PC-9 (cell line): ENCODE measurements at regions of chr2 and their contacts with region 1.

Region 1: GRCh38 chr2:237122214-237122666 is 36.6 kb downstream of the COPS8 start:
- DNase-seq: peak; percentile 55 to 67
- H3K4me3 ChIP-seq: no peak overlapping the region
- H3K27ac ChIP-seq: peak overlapping the region; percentile 44
- H3K4me1 ChIP-seq: peaks cover 19% of the 10 kb centered on the region; the same call in 1 of the 2 replicates
- H3K27me3 ChIP-seq: no peaks in the 10 kb centered on the region
- CTCF ChIP-seq: peak; percentile 79

Region 2: GRCh38 chr2:238127317-238128200 is 1005.3 kb after region 1 on chr2:
- CTCF ChIA-PET with region 1: interaction called, 14 read pairs
- POLR2A ChIA-PET with region 1: no interaction called
- intact Hi-C with region 1: no loop called
- DNase-seq: peak in 1 of 2 experiments; percentile 65
- H3K4me3 ChIP-seq: no peak overlapping the region
- H3K27ac ChIP-seq: no peak overlapping the region
- H3K4me1 ChIP-seq: no peaks in the 10 kb centered on the region
- H3K27me3 ChIP-seq: peaks cover 15% of the 10 kb centered on the region
- CTCF ChIP-seq: no peak